PC-9 (cell line): ENCODE measurements at regions of chr4 and their contacts with region 1.

Region 1: DNA sequence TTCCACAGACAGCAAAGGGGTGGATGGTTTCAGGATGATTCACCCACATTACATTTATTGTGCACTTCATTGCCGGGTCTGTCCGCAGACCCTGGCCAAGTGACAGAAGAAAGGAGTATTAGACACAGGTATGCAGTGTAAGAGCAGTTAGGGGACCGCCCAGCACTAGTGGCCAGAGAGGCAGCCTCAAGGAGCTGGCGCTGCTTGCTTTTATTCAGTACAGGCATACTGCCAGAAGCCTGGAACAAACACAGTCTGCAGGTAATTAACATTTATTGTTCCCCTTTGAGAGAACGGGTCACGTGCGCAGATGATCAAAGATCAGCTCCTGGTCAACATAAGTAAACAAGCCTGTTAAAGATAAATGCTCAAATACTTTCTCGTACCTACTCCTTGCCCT is 1639.0 kb upstream of the IGFBP7 start:
- DNase-seq: no peak
- H3K4me3 ChIP-seq: no peak overlapping the region
- H3K27ac ChIP-seq: no peak overlapping the region
- H3K4me1 ChIP-seq: no peaks in the 10 kb centered on the region
- H3K27me3 ChIP-seq: no peaks in the 10 kb centered on the region
- CTCF ChIP-seq: no peak

Region 2: DNA sequence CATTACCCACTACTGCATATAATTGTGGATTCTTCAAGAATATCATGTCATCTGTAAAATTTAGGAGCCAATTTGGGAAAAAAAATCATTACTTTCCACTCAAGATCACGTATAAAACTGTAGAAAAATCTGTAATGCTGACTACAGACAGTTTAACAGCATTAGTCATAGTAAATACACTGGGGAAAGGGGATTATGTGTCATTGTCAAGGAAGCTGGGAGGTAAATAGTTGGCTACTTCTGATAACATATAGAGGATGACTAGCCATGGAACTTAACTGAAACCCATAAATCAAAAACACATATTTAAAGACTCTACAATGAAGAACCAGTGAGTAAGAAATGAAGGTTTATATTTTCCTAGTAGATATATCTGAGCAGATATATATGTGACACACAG is 27.4 kb after region 1 on chr4:
- CTCF ChIA-PET with region 1: interaction called, 14 read pairs
- POLR2A ChIA-PET with region 1: no interaction called
- intact Hi-C with region 1: no loop called
- DNase-seq: no peak
- H3K4me3 ChIP-seq: no peak overlapping the region
- H3K27ac ChIP-seq: no peak overlapping the region
- H3K4me1 ChIP-seq: no peaks in the 10 kb centered on the region
- H3K27me3 ChIP-seq: no peaks in the 10 kb centered on the region
- CTCF ChIP-seq: no peak

Region 3: GRCh38 chr4:58983887-58984286 is 234.7 kb after region 1 on chr4:
- CTCF ChIA-PET with region 1: no interaction called
- POLR2A ChIA-PET with region 1: no interaction called
- intact Hi-C with region 1: no loop called
- DNase-seq: no peak
- H3K4me3 ChIP-seq: no peak overlapping the region
- H3K27ac ChIP-seq: no peak overlapping the region
- H3K4me1 ChIP-seq: no peaks in the 10 kb centered on the region
- H3K27me3 ChIP-seq: no peaks in the 10 kb centered on the region
- CTCF ChIP-seq: no peak